Posterior vena cava (tissue), 2 donors: ENCODE measurements at regions of chr10 and their contacts with region 1.

Region 1: GRCh38 chr10:121678631-121679174 is 80.5 kb upstream of the FGFR2 start:
- DNase-seq: no peak

Region 2: DNA sequence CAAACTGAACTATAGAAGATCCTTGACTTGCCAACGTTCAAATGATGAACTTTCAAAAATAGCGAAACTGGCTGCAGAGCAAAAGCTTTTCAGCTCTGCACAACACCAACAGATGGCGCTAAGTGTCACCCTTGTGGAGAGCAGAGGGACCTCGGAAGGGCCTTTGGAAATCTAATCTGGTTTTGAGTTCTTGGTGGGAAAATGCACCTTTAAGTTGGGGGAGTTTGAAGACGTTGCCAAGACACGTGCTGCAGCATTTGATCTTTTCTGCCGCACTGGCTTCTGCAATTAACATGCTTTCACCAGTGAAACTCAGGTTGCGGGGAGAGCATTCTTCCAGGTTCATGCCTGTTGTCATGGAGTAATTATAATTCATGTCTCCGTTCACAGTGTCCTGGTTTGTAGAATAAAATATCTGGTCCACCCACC is 853.8 kb before region 1 on chr10:
- intact Hi-C with region 1: loop called in 1 of 2 experiments (anchors 5 kb)
- DNase-seq: no peak

Region 3: GRCh38 chr10:121662945-121663917 is 15.5 kb before region 1 on chr10:
- intact Hi-C with region 1: no loop called
- DNase-seq: no peak